Prostate gland (tissue), 2 donors: ENCODE measurements at regions of chr1 and their contacts with region 1.

Region 1: GRCh38 chr1:13965770-13966398 is 265.9 kb downstream of the PRDM2 start:
- DNase-seq: peak; percentile 45
- H3K4me3 ChIP-seq: no peak overlapping the region
- H3K27ac ChIP-seq: no peak overlapping the region
- H3K4me1 ChIP-seq: no peaks in the 10 kb centered on the region
- H3K27me3 ChIP-seq: no peaks in the 10 kb centered on the region
- CTCF ChIP-seq: peak in 3 of 4 experiments; percentile 33 to 70 (median 68)
- POLR2A ChIP-seq: no peak

Region 2: GRCh38 chr1:15046487-15047165 is 1080.7 kb after region 1 on chr1:
- intact Hi-C with region 1: loop called (anchors 5 kb)
- DNase-seq: peak; percentile 65
- H3K4me3 ChIP-seq: no peak overlapping the region
- H3K27ac ChIP-seq: no peak overlapping the region
- H3K4me1 ChIP-seq: no peaks in the 10 kb centered on the region
- H3K27me3 ChIP-seq: no peaks in the 10 kb centered on the region
- CTCF ChIP-seq: peak; percentile 67 to 92 (median 90)
- POLR2A ChIP-seq: no peak

Region 3: DNA sequence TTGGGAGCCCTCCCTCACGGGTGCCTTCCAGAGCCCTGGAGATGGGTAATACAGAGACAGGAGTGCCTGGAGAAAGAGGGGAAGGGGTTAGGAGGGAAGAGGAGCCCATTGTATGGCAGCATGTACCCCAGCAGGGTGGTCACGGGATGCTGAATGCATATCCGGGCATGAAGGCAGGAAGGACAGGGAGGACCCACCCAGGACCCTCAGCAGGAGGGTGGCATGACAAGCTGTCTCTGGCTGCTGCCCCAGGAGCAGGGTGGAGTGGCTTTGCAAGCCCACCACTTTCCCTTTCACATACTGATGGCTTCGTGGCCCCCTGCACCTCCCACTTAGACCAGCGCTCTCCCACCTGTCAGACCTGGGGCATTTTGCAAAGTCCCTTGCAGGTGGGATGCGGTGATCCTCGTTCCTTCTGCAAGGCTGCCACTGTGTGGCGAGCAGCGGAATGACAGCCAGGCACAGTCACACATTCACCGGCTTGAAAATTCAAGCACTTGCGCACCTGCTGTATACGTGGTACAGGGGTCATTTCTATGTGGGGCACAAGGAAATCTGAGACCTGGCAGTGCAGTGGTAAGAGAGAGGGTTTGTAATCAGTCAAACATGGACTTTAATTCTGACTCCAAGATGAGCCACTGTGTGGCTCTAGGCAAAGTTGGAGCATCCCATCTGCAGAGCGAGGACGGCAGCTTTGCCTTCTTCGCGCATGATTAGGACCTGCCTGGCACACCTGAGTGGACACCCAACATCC is 1134.4 kb after region 1 on chr1:
- intact Hi-C with region 1: loop called (anchors 5 kb)
- DNase-seq: peak; percentile 33
- H3K4me3 ChIP-seq: no peak overlapping the region
- H3K27ac ChIP-seq: no peak overlapping the region
- H3K4me1 ChIP-seq: no peaks in the 10 kb centered on the region
- H3K27me3 ChIP-seq: no peaks in the 10 kb centered on the region
- CTCF ChIP-seq: peak; percentile 72 to 96 (median 88)
- POLR2A ChIP-seq: no peak